ENCODE measurements at regions of chr1 and their contacts with region 1.

Region 1: GRCh38 chr1:34455121-34455520 is 278.4 kb downstream of the C1orf94 start:
- DNase-seq: no peak
- ATAC-seq: no peak
- H3K4me3 ChIP-seq: no peak overlapping the region
- H3K27ac ChIP-seq: no peak overlapping the region
- H3K4me1 ChIP-seq: no peaks in the 10 kb centered on the region
- H3K27me3 ChIP-seq: peaks cover 0 to 11% (median 0%) of the 10 kb centered on the region in 7 donors
- CTCF ChIP-seq: no peak

Region 2: DNA sequence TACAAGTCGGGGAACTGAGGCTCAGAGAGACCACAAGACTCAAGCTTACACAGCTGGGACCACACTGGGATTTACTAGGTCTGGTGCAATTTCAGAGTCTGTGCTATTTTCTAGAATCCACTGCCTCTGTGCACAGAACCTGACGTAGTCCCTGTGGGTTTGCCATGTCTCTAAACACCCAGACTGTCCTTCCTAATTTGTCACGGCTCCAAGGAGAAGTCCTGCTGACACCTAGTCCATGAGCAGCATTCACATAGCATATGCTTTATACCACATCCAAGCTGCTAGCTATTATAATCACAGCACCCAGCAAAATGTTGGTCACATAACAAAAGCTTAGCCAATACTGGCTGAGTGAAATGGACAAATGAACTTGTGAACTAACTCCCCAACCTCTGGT is 670.2 kb before region 1 on chr1:
- intact Hi-C with region 1: loop called in 1 of 10 experiments (anchors 5 kb)
- DNase-seq: no peak
- ATAC-seq: no peak
- H3K4me3 ChIP-seq: no peak overlapping the region
- H3K27ac ChIP-seq: no peak overlapping the region
- H3K4me1 ChIP-seq: peaks cover 0 to 6% (median 0%) of the 10 kb centered on the region in 9 donors
- H3K27me3 ChIP-seq: peaks cover 0 to 31% (median 11%) of the 10 kb centered on the region in 7 donors
- CTCF ChIP-seq: no peak

Region 3: DNA sequence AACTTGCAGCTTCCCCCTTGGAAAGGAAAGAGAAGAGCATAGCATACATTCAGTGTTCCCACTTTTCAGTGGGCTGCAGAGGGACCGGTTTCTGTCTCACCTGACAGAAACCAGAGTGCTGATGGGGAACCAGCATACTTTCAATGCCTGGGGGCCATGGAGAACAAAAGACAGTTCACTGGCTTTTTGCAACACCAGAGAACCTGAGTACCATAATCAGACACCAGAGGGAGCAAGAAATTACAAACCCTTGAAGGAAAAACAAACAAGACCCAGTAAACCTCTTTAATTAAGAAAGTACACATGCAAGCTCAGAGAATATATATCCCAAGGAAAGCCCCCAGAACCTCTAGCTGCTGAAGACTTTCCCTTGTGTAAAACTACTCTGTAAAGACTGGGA is 341.2 kb before region 1 on chr1:
- intact Hi-C with region 1: no loop called
- DNase-seq: no peak
- ATAC-seq: no peak
- H3K4me3 ChIP-seq: no peak overlapping the region
- H3K27ac ChIP-seq: no peak overlapping the region
- H3K4me1 ChIP-seq: no peaks in the 10 kb centered on the region
- H3K27me3 ChIP-seq: peaks cover 0 to 4% (median 0%) of the 10 kb centered on the region in 7 donors
- CTCF ChIP-seq: peak in 6 of 9 donors; percentile 9 to 36 (median 30)

Region 4: GRCh38 chr1:34597877-34598514 is 142.9 kb after region 1 on chr1:
- intact Hi-C with region 1: loop called in 1 of 10 experiments (anchors 10 kb)
- DNase-seq: peak; percentile 29 to 54
- ATAC-seq: peak in 6 of 8 donors; percentile 49 to 75 (median 62)
- H3K4me3 ChIP-seq: no peak overlapping the region
- H3K27ac ChIP-seq: no peak overlapping the region
- H3K4me1 ChIP-seq: no peaks in the 10 kb centered on the region
- H3K27me3 ChIP-seq: peaks cover 0 to 47% (median 24%) of the 10 kb centered on the region in 7 donors
- CTCF ChIP-seq: peak; percentile 33 to 75 (median 69)

Region 5: DNA sequence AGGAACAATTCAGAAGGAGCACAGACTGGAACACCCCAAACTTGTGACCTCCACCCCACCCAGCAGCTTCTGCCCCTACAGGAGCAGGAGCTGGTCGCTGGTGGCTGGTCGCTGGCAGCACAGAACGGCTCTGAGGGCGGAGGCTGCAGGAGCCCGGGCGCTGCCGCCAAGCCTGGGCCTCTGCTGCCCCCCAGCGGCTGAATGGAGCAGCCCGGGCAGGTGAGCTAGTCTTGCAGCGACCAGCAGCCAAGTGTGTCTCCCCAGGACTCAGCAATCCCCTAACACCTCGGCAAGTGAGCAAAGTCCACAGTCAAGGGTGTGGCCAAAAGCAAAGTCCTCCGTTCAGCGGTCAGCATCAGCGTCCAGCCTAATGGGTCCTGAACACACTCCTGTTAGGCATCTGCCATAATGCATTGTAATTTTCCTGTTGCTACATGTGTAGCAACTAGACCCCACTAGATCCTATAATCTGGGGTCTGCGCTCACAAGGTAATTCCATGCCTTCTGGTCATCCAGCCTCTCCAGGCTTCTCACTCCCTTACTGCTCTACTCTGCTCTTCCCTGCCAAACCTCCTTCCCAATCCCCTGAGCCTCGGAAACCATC is 287.6 kb after region 1 on chr1:
- intact Hi-C with region 1: loop called in 5 of 10 experiments (anchors 5 to 10 kb)
- DNase-seq: peak; percentile 65 to 80
- ATAC-seq: peak; percentile 82 to 92 (median 88)
- H3K4me3 ChIP-seq: no peak overlapping the region
- H3K27ac ChIP-seq: no peak overlapping the region
- H3K4me1 ChIP-seq: peaks cover 0 to 4% (median 0%) of the 10 kb centered on the region in 9 donors
- H3K27me3 ChIP-seq: peaks cover 0 to 42% (median 23%) of the 10 kb centered on the region in 7 donors
- CTCF ChIP-seq: peak; percentile 89 to 97 (median 95)

Measured in heart right ventricle (tissue), 16 donors.